PC-9 (cell line): ENCODE measurements at regions of chr1 and their contacts with region 1.

Region 1: GRCh38 chr1:168439456-168440375 is 104.1 kb downstream of the XCL2 start:
- DNase-seq: peak; percentile 59 to 67
- H3K4me3 ChIP-seq: peak overlapping the region; percentile 35; the same call in 1 of the 2 replicates
- H3K27ac ChIP-seq: no peak overlapping the region
- H3K4me1 ChIP-seq: no peaks in the 10 kb centered on the region; the same call in 1 of the 2 replicates
- H3K27me3 ChIP-seq: no peaks in the 10 kb centered on the region
- CTCF ChIP-seq: peak; percentile 85

Region 2: GRCh38 chr1:168234846-168235547 is 204.7 kb before region 1 on chr1:
- CTCF ChIA-PET with region 1: no interaction called
- POLR2A ChIA-PET with region 1: no interaction called
- intact Hi-C with region 1: loop called (anchors 5 kb)
- DNase-seq: no peak
- H3K4me3 ChIP-seq: no peak overlapping the region
- H3K27ac ChIP-seq: no peak overlapping the region
- H3K4me1 ChIP-seq: peaks cover 17% of the 10 kb centered on the region
- H3K27me3 ChIP-seq: no peaks in the 10 kb centered on the region
- CTCF ChIP-seq: peak; percentile 69

Region 3: DNA sequence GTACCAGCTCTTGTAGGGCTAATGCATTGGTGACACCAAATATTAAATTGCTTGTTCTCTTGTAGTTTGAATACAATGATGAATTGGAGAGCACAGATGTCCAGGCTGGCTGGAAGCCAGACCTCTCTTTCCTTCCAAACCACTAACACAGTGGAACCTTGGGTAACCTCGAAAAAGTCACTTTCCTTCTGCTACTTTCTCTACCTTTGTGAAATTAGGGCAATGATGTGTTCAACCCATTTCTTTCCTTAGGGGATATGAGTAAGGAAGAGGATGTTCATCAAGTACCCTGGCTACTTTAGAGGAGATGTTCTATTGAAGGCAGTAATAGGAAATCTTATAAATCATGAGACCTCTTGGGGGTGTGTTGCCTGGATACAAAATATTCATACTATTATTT is 48.4 kb after region 1 on chr1:
- CTCF ChIA-PET with region 1: no interaction called
- POLR2A ChIA-PET with region 1: no interaction called
- intact Hi-C with region 1: no loop called
- DNase-seq: no peak
- H3K4me3 ChIP-seq: no peak overlapping the region
- H3K27ac ChIP-seq: no peak overlapping the region
- H3K4me1 ChIP-seq: peaks cover 12% of the 10 kb centered on the region
- H3K27me3 ChIP-seq: no peaks in the 10 kb centered on the region
- CTCF ChIP-seq: no peak

Region 4: DNA sequence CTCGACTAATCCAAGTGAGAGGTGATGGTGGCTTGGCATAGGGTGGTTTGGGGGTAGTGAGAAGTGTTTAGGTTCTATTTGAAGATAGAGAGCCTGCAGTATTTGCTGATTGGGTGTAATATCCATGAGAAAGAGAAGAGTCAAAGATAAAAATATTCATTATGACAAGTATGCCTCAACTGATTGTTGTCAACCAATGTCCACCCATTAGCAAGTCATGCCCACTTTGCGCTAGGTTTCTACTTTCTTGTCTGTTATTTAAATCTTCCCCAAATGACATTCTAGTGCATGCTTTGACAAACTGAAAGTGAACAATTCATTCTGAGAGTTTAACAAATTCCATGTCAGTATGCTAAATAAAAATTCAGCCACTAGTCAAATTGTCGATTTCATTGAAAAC is 132.9 kb after region 1 on chr1:
- CTCF ChIA-PET with region 1: no interaction called
- POLR2A ChIA-PET with region 1: no interaction called
- intact Hi-C with region 1: loop called (anchors 5 kb)
- DNase-seq: no peak
- H3K4me3 ChIP-seq: no peak overlapping the region
- H3K27ac ChIP-seq: no peak overlapping the region
- H3K4me1 ChIP-seq: no peaks in the 10 kb centered on the region
- H3K27me3 ChIP-seq: no peaks in the 10 kb centered on the region
- CTCF ChIP-seq: no peak

Region 5: GRCh38 chr1:169348383-169349036 is 908.8 kb after region 1 on chr1:
- CTCF ChIA-PET with region 1: interaction called, 4 read pairs
- POLR2A ChIA-PET with region 1: no interaction called
- intact Hi-C with region 1: loop called (anchors 1 kb)
- DNase-seq: no peak
- H3K4me3 ChIP-seq: no peak overlapping the region
- H3K27ac ChIP-seq: no peak overlapping the region
- H3K4me1 ChIP-seq: no peaks in the 10 kb centered on the region
- H3K27me3 ChIP-seq: no peaks in the 10 kb centered on the region
- CTCF ChIP-seq: peak; percentile 91